Heart left ventricle (tissue), 16 donors: ENCODE measurements at regions of chr5 and their contacts with region 1.

Region 1: DNA sequence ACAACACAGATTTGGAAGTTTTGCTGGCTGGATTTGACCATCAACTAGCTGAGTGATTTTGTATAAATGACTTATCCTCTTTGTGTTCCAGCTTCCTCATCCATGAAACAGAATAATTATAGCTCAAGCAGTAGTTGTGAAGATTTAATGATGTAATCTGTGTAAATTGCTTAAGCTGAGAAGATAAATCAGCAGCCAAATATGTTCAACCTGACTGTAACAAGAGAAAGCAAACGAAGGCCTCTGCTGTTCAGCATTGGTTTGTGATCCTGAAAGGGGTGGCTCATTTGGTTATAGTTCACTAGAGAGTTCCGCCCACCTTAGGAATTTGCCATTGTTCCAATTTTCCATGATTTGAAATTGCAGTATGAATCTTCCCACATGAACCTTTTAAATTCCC is 75.7 kb upstream of the CCDC112 start:
- DNase-seq: no peak
- ATAC-seq: no peak
- H3K4me3 ChIP-seq: no peak overlapping the region
- H3K27ac ChIP-seq: peak overlapping the region in 5 of 12 donors; percentile 21 to 62 (median 31)
- H3K4me1 ChIP-seq: peaks cover 0 to 19% (median 4%) of the 10 kb centered on the region in 12 donors
- H3K27me3 ChIP-seq: no peaks in the 10 kb centered on the region
- CTCF ChIP-seq: no peak
- POLR2A ChIP-seq: no peak

Region 2: DNA sequence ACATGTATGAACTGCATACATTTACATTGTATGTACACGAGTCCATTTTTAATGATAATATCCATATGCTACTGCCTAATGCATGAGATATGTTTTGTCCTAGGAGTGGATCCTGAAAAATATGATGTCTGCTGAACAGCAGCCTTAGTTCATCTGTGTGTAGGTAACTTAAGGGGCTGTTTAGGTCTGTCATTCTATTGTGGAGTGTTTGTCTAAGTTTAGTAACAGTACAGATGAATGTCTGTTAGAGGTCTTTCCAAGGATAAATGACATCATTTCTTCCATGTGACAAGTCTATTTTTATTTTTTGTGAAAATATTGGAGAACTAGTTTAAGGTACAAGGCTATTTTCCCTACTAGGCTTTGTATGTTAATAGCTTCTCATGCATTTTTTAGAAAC is 53.1 kb before region 1 on chr5:
- intact Hi-C with region 1: loop called (anchors 5 to 10 kb)
- DNase-seq: no peak
- ATAC-seq: peak; percentile 73 to 86 (median 81)
- H3K4me3 ChIP-seq: no peak overlapping the region
- H3K27ac ChIP-seq: peak overlapping the region in 9 of 12 donors; percentile 5 to 49 (median 28)
- H3K4me1 ChIP-seq: peaks cover 0 to 15% (median 2%) of the 10 kb centered on the region in 12 donors
- H3K27me3 ChIP-seq: no peaks in the 10 kb centered on the region
- CTCF ChIP-seq: no peak
- POLR2A ChIP-seq: no peak